Activated T-helper 2 cell treated with anti-CD3 and anti-CD28 coated beads, Interferon-gamma antibody, Interleukin-2, Interleukin-4, amounts not matched to agents 10 μg/mL and 5 μg/mL and 100 μg/mL, durations not matched to agents 14 hours and 24 hours and 36 hours (primary cell): ENCODE measurements at regions of chr9 and their contacts with region 1.

Region 1: DNA sequence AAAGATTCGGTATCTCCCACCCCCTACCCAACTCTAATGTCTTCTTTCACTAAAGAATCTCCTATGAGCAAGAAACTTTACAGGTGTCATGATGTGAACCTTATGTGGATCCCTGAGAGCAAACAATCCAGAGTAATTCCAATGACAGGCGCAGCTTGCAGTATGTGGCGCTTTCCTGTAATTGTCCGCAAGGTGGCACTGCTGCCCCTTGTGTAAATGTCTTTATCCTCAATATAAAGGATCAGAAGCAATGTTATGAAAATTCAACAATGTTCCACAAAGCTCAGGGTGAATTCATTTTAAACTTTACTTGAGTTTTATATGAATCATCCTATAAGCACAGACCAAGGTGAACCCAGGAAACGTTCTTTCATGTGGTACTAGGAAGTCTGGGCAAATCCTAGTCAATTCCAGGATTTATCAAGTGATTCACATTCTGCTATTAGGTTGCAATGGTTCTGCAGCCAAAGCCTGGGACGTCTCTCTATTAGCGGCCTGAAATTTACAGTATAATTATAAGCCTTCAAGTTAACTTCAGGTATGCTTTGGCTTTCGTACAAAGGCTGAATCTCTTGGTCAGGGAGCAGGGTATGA is 113.7 kb downstream of the TRPM6 start:
- DNase-seq: peak; percentile 55
- H3K4me3 Mint-ChIP-seq: no peak overlapping the region
- H3K27ac Mint-ChIP-seq: no peak overlapping the region
- H3K4me1 Mint-ChIP-seq: peaks cover 16% of the 10 kb centered on the region
- H3K27me3 Mint-ChIP-seq: peaks cover 6% of the 10 kb centered on the region

Region 2: GRCh38 chr9:74804018-74804385 is 30.0 kb after region 1 on chr9:
- intact Hi-C with region 1: no loop called
- DNase-seq: no peak
- H3K4me3 Mint-ChIP-seq: no peak overlapping the region
- H3K27ac Mint-ChIP-seq: no peak overlapping the region
- H3K4me1 Mint-ChIP-seq: no peaks in the 10 kb centered on the region
- H3K27me3 Mint-ChIP-seq: peaks cover 10% of the 10 kb centered on the region

Region 3: GRCh38 chr9:75001719-75002422 is 227.9 kb after region 1 on chr9:
- intact Hi-C with region 1: loop called (anchors 1 kb)
- DNase-seq: no peak
- H3K4me3 Mint-ChIP-seq: no peak overlapping the region
- H3K27ac Mint-ChIP-seq: no peak overlapping the region
- H3K4me1 Mint-ChIP-seq: peaks cover 4% of the 10 kb centered on the region
- H3K27me3 Mint-ChIP-seq: no peaks in the 10 kb centered on the region

Region 4: DNA sequence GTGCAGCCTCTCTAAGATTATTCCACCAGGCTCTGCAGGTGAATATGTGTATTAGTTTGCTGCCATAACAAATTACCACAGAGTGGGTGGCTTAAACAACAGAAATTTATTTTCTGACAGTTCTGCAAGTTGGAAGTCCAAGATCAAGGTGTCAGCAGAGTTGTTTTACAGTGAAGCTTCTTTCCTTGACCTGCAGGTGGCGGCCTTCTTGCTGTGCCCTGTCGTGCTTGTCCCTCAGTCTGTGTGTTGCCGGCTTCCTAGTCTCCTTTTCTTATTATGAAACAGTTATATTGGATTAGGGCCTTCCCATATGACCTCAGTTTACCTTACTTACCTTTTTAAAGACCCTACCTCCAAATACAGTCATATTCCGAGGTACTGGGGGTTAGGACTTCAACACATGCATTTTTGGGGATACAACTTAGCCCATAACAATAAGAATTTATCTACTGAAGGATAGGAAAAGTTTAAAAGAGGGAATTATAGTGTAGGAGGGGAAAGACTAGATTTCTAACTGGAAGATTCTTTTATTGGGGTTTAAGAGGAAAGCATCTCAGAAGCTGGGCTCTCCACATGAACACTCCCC is 411.7 kb after region 1 on chr9:
- intact Hi-C with region 1: loop called (anchors 5 kb)
- DNase-seq: peak; percentile 14
- H3K4me3 Mint-ChIP-seq: no peak overlapping the region
- H3K27ac Mint-ChIP-seq: no peak overlapping the region
- H3K4me1 Mint-ChIP-seq: peaks cover 21% of the 10 kb centered on the region
- H3K27me3 Mint-ChIP-seq: peaks cover 2% of the 10 kb centered on the region

Region 5: DNA sequence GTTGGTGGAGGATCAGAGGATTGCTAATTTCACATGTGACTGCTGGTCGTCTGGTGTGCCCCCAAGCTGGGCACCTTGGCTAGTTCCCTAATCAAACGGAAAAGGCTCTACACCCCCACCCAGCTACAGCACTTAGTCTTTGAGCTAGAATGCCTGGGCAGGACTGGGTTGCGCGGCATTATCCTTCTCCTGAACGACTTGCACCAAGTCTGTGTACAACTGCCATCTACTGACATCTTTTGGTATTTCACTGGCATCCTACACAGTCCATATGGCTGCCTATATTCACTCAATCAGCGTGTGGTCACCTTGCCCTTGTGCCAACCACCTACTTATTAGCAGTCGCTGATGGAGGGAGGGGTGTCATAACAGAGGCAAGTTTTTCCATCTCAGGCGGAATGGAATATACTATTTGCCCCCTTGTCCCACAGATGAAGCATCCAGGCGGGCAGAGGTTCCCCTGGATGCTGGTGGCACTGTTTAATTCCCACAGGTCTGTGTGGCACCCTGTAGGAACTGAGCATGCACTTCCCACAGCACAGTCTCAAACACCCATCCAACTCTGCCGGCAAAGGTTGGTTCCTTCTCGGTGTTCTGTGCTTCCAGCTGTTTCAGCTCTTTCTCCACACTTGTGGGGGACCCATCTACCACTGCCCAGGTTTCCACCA is 464.5 kb after region 1 on chr9:
- intact Hi-C with region 1: loop called (anchors 2 kb)
- DNase-seq: peak; percentile 18
- H3K4me3 Mint-ChIP-seq: no peak overlapping the region
- H3K27ac Mint-ChIP-seq: no peak overlapping the region
- H3K4me1 Mint-ChIP-seq: no peaks in the 10 kb centered on the region
- H3K27me3 Mint-ChIP-seq: peaks cover 1% of the 10 kb centered on the region